Lower leg skin (tissue), 4 donors: ENCODE measurements at regions of chr5 and their contacts with region 1.

Region 1: DNA sequence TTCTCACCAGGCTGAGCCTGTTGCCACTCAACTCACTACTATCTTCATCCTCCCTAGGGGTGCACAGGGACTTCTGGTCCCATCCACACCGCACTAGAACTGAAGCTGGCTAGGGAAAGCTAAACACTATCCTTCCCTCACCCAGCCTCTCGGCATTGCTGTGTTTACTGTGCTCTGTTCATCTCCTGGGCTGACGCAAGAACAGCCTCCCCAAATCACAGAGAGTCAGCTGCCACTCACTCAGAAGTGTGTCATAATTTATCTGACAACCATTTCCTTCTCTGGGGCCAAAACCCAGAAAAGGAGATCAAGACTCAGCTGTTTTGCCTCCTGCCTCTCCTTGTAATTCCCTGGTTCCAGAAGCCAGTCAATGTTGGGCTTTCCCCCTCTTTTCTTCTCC is 92.8 kb downstream of the ARHGEF28 start:
- DNase-seq: no peak
- H3K4me3 ChIP-seq: no peak overlapping the region
- CTCF ChIP-seq: no peak
- POLR2A ChIP-seq: no peak

Region 2: GRCh38 chr5:73687357-73687756 is 31.4 kb before region 1 on chr5:
- intact Hi-C with region 1: loop called (anchors 1 kb)
- DNase-seq: no peak
- H3K4me3 ChIP-seq: no peak overlapping the region
- CTCF ChIP-seq: no peak
- POLR2A ChIP-seq: no peak